ENCODE measurements at regions of chr17 and their contacts with region 1.

Region 1: DNA sequence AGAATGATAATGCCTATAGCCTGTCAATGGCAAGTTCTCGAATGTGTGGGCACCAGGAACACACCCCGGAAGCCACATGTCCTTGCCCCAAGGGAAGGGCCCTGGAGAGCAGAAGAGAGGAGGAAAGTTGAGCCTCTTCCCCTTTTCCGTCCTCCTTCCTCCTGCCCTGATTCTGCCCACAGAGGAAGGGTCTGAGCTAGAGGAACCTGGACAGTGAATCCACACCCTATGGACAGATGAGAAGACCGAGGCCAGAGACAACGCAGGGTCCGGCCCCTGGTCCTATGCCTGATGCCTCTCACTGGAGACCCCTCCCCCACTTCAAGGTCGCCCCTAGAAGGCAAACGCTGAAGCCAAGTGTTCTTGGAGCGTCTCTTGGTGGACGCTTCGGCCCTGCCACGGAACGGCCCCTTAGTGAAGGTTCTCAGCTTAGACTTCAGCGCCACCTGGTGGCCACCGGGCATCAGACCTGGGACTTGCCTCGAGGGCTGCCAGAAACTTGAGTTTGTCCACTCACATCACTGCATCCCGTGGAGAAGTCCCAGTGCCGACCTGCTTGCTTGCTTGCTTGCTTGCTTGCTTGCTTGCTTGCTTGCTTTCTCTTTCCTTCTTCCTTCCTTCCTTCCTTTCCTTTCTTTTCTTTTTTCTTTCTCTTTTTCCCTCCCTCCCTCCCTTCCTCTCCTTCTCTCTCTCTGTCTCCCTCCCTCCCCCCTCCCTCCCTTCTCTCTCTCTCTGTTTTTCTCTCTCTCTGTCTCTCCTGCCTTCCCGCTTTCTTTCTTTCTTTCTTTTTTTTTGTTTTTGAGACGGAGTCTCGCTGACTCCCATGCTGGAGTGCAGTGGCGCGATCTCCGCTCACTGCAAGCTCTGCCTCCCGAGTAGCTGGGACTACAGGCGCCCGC is 20.6 kb upstream of the SPNS3 start:
- DNase-seq: peak; percentile 80 to 91
- H3K4me3 ChIP-seq: no peak overlapping the region
- H3K27ac ChIP-seq: no peak overlapping the region
- H3K4me1 ChIP-seq: peaks cover 2% of the 10 kb centered on the region; the same call in 1 of the 2 replicates
- H3K27me3 ChIP-seq: no peaks in the 10 kb centered on the region
- CTCF ChIP-seq: peak; percentile 97

Region 2: DNA sequence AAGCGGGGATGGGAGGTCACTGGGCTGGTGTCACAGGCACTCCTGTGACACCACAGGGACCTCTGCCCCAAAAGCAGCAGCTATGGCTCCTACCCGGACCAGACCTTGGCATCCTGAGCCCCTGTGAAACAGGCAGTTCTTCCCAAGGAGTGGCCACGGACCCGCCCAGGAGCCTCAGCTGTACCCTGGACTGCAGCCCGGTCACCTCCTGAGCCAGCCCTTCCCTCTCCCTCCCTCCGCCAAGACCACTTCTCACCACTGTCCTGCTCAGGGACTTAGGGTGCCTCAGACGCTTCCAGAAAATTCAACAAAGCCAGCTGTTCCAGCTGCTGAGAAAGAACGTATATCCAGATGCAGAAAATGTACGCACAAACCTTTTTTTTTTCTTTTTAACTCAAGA is 553.2 kb before region 1 on chr17:
- CTCF ChIA-PET with region 1: no interaction called
- POLR2A ChIA-PET with region 1: no interaction called
- intact Hi-C with region 1: loop called (anchors 5 kb)
- DNase-seq: no peak
- H3K4me3 ChIP-seq: no peak overlapping the region
- H3K27ac ChIP-seq: no peak overlapping the region
- H3K4me1 ChIP-seq: no peaks in the 10 kb centered on the region
- H3K27me3 ChIP-seq: no peaks in the 10 kb centered on the region
- CTCF ChIP-seq: no peak

Region 3: DNA sequence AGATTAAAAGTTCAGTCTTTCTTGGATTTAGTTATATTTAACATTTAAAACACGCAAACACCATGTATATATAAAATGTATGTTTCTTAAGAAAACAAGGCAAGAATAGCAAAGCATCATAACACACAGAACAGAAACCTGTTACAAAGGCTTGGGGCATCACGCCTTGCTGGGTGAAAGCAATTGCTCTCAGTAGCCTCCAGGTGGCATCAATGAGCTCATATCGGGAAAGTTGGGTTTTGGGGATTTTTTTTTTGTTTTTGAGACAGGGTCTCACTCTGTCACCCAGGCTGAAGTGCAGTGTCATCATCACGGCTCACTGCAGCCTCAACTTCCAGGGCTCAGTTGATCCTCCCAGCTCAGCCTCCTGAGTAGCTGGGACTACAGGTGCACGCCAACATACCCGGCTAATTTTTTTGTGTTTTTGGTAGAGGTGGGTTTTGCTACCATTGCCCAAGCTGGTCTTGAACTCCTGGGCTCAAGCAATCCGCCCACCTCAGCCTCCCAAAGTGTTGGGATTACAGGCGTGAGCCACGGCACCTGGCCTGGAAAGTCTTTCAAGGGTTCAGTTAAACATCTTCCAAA is 213.3 kb before region 1 on chr17:
- CTCF ChIA-PET with region 1: interaction called, 15 read pairs
- POLR2A ChIA-PET with region 1: interaction called, 17 read pairs
- intact Hi-C with region 1: loop called (anchors 1 kb)
- DNase-seq: peak in 1 of 2 experiments; percentile 19
- H3K4me3 ChIP-seq: no peak overlapping the region
- H3K27ac ChIP-seq: no peak overlapping the region
- H3K4me1 ChIP-seq: no peaks in the 10 kb centered on the region
- H3K27me3 ChIP-seq: no peaks in the 10 kb centered on the region
- CTCF ChIP-seq: peak; percentile 89

Region 4: DNA sequence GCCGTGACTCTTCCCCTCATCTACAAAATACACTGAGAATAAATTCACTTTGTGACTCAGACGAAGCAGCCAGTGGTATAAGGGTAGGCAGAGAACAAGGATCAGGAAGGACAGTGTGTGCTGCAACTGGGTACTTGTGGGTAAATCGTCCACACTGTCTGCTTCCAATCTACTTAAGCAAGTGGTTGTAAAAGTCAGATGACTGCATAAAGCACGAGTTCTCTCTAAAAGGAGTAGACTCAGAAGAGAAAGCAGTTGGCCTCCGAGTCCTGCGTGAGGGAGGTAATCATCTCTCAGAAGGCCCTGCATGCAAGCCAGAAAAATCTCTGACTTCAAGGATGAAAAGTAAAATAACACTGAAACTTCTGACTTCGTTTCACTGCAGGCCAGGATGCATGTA is 192.5 kb before region 1 on chr17:
- CTCF ChIA-PET with region 1: interaction called, 5 read pairs
- POLR2A ChIA-PET with region 1: no interaction called
- intact Hi-C with region 1: loop called (anchors 1 kb)
- DNase-seq: no peak
- H3K4me3 ChIP-seq: no peak overlapping the region
- H3K27ac ChIP-seq: no peak overlapping the region
- H3K4me1 ChIP-seq: no peaks in the 10 kb centered on the region
- H3K27me3 ChIP-seq: no peaks in the 10 kb centered on the region
- CTCF ChIP-seq: no peak

Region 5: GRCh38 chr17:4263282-4264215 is 149.6 kb before region 1 on chr17 and contains the start of gene ANKFY1:
- CTCF ChIA-PET with region 1: interaction called, 20 read pairs
- POLR2A ChIA-PET with region 1: no interaction called
- intact Hi-C with region 1: loop called (anchors 5 kb)
- DNase-seq: peak; percentile 85 to 98
- H3K4me3 ChIP-seq: peak within 1 kb of the TSS; percentile 64
- H3K27ac ChIP-seq: peak within 1 kb of the TSS; percentile 46
- H3K4me1 ChIP-seq: peaks cover 14% of the 10 kb centered on the region
- H3K27me3 ChIP-seq: no peaks in the 10 kb centered on the region
- CTCF ChIP-seq: no peak
- total RNA-seq, gene ANKFY1: 63.9 and 74.5 TPM in 2 replicates

Region 6: GRCh38 chr17:4304417-4305027 is 108.7 kb before region 1 on chr17:
- CTCF ChIA-PET with region 1: no interaction called
- POLR2A ChIA-PET with region 1: no interaction called
- intact Hi-C with region 1: loop called (anchors 1 kb)
- DNase-seq: peak in 1 of 2 experiments; percentile 11
- H3K4me3 ChIP-seq: no peak overlapping the region
- H3K27ac ChIP-seq: no peak overlapping the region
- H3K4me1 ChIP-seq: no peaks in the 10 kb centered on the region
- H3K27me3 ChIP-seq: no peaks in the 10 kb centered on the region
- CTCF ChIP-seq: peak; percentile 84

Region 7: DNA sequence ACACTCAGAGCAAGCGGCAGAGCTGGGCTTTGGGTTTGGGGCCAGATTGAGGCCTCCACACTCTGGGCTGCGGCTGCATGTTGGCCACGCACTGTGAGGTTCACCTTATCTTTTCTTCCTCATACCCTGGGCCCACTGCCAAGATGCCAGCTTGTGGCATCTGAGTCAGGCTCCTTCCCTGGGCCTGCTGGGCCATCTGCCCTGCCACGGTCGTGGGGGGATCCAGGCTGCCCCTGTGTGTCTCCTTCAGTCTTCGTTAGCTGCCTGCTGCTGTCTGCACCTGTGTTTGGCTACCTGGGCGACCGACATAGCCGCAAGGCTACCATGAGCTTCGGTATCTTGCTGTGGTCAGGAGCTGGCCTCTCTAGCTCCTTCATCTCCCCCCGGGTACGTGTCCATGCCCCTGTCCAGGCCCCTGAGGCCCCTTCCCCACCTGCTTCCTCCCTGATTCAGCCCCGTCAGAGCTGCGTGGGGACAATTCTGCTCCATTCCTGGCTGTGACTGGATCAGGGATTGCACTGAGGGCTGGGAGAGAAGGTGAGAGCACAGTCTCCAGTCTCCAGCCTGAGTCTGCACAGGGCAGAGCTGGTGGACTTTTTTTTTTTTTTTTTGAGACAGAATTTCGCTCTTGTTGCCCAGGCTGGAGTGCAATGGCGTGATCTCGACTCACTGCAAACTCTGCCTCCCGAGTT is 31.7 kb after region 1 on chr17:
- CTCF ChIA-PET with region 1: no interaction called
- POLR2A ChIA-PET with region 1: no interaction called
- intact Hi-C with region 1: no loop called
- DNase-seq: peak; percentile 79 to 90
- H3K4me3 ChIP-seq: no peak overlapping the region
- H3K27ac ChIP-seq: no peak overlapping the region
- H3K4me1 ChIP-seq: peaks cover 27% of the 10 kb centered on the region
- H3K27me3 ChIP-seq: no peaks in the 10 kb centered on the region
- CTCF ChIP-seq: no peak

Region 8: GRCh38 chr17:4534026-4534914 is 121.1 kb after region 1 on chr17:
- CTCF ChIA-PET with region 1: no interaction called
- POLR2A ChIA-PET with region 1: no interaction called
- intact Hi-C with region 1: no loop called
- DNase-seq: peak; percentile 48 to 79
- H3K4me3 ChIP-seq: no peak overlapping the region
- H3K27ac ChIP-seq: peak overlapping the region; percentile 41; the same call in 1 of the 2 replicates
- H3K4me1 ChIP-seq: peaks cover 12% of the 10 kb centered on the region; the same call in 1 of the 2 replicates
- H3K27me3 ChIP-seq: no peaks in the 10 kb centered on the region
- CTCF ChIP-seq: no peak

Region 9: DNA sequence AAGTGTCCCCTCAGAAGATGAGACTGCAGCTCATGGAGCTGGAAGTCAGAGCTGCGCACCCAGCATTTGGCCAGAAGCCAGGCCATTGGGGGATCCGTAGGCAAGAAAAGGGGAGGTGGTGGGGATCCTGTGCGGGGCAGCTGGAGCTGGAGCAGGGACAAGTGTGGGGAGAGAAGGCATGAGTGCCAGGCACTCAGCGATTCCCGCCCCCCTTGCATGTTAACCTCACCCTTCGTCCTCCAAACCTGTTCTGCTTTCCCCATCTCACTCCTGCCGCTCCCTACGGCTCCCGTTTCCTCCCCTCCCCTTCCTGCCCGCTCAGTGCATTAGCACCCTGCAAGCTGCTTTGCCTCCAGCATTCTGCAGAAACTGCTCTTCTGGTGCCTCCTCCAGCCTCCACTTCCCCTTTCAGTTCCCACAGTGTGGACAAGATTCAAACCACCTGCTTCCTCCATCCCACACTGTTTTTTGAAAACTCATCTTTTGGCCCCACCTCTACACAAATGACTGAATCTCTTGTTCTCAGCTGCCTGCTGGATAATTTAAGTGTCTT is 222.7 kb after region 1 on chr17:
- CTCF ChIA-PET with region 1: interaction called, 7 read pairs
- POLR2A ChIA-PET with region 1: interaction called, 34 read pairs
- intact Hi-C with region 1: no loop called
- DNase-seq: peak in 1 of 2 experiments; percentile 26
- H3K4me3 ChIP-seq: no peak overlapping the region
- H3K27ac ChIP-seq: no peak overlapping the region
- H3K4me1 ChIP-seq: peaks cover 10% of the 10 kb centered on the region; the same call in 1 of the 2 replicates
- H3K27me3 ChIP-seq: peaks cover 5% of the 10 kb centered on the region; the same call in 1 of the 2 replicates
- CTCF ChIP-seq: no peak

Region 10: GRCh38 chr17:4833178-4833940 is 420.2 kb after region 1 on chr17 and contains the start of gene MINK1:
- CTCF ChIA-PET with region 1: no interaction called
- POLR2A ChIA-PET with region 1: no interaction called
- intact Hi-C with region 1: no loop called
- DNase-seq: peak; percentile 77 to 95
- H3K4me3 ChIP-seq: peak within 1 kb of the TSS; percentile 66
- H3K27ac ChIP-seq: peak within 1 kb of the TSS; percentile 91
- H3K4me1 ChIP-seq: peaks cover 18% of the 10 kb centered on the region
- H3K27me3 ChIP-seq: no peaks in the 10 kb centered on the region
- CTCF ChIP-seq: no peak
- total RNA-seq, gene MINK1: 160 and 190 TPM in 2 replicates

Region 11: DNA sequence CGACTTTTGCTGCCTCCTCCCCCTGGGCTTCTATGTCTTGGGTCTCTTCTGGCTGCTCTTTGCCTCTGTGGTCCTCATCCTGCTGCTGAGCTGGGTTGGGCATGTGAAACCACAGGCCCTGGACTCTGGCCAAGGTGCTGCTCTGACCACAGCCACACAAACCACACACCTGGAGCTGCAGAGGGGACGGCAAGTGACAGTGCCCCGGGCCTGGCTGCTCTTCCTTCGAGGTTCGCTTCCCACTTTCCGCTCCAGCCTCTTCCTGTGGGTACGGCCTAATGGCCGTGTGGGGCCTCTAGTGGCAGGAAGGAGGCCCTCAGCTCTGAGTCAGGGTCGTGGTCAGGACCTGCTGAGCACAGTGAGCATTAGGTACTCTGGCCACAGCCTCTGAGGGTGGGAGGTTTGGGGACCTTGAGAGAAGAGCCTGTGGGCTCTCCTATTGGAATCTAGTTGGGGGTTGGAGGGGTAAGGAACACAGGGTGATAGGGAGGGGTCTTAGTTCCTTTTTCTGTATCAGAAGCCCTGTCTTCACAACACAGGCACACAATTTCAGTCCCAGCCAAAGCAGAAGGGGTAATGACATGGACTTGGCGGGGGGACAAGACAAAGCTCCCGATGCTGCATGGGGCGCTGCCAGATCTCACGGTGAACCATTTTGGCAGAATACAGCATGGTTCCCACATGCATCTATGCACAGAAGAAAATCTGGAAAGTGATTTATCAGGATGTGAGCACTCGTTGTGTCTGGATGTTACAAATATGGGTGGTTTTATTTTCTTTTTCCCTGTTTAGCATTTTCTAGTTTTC is 521.2 kb after region 1 on chr17:
- CTCF ChIA-PET with region 1: no interaction called
- POLR2A ChIA-PET with region 1: no interaction called
- intact Hi-C with region 1: no loop called
- DNase-seq: peak; percentile 54 to 77
- H3K4me3 ChIP-seq: no peak overlapping the region
- H3K27ac ChIP-seq: no peak overlapping the region
- H3K4me1 ChIP-seq: peaks cover 21% of the 10 kb centered on the region
- H3K27me3 ChIP-seq: no peaks in the 10 kb centered on the region
- CTCF ChIP-seq: no peak; the same call in 1 of the 2 replicates